ENCODE measurements at regions of chr20 and their contacts with region 1.

Region 1: GRCh38 chr20:50744143-50744792 is 12.9 kb downstream of the PARD6B start:
- DNase-seq: peak; percentile 66
- H3K4me3 ChIP-seq: no peak overlapping the region
- H3K27me3 ChIP-seq: no peaks in the 10 kb centered on the region
- CTCF ChIP-seq: peak; percentile 51

Region 2: DNA sequence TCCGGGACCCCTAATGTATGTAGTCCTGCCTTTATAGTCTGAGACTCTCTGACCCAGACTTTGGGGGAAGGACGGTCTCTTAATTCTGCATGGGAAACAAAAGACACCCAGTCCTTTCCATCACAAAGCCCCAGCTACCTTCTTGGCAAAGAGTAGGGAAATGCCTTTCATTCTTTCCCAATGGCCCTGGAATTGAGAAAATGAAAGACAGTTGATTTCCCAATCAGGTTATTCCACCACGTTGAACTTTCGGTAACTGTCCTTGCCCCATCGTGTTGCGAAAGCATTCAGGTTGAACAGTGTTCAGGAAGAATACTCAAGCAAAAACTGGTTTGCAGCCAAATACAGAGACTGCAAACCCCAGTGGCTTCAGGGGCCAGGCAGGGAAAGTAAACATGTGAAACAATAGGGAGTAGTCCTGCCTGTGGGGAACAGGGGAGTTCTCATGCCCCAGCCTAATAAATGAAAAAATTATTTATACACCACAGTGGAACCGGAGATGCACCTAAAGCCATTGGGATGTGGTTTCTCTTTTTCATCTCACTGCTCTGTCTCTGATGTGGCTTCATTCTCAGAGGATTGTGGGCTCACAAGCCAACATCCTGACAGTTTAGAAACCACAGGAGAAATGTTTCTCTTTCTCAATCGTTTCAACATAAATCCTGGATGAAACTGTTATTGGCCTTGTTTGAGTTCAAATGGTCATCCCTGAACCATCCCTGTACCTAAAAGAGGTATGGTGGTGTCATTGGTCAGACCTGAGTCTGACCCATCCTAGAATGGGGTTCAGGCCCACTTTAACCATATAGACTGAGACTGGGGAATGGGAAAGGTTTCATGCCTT is 975.8 kb before region 1 on chr20:
- CTCF ChIA-PET with region 1: no interaction called
- POLR2A ChIA-PET with region 1: interaction called, 19 read pairs
- DNase-seq: peak; percentile 68
- H3K4me3 ChIP-seq: no peak overlapping the region
- H3K27me3 ChIP-seq: no peaks in the 10 kb centered on the region
- CTCF ChIP-seq: no peak

Region 3: DNA sequence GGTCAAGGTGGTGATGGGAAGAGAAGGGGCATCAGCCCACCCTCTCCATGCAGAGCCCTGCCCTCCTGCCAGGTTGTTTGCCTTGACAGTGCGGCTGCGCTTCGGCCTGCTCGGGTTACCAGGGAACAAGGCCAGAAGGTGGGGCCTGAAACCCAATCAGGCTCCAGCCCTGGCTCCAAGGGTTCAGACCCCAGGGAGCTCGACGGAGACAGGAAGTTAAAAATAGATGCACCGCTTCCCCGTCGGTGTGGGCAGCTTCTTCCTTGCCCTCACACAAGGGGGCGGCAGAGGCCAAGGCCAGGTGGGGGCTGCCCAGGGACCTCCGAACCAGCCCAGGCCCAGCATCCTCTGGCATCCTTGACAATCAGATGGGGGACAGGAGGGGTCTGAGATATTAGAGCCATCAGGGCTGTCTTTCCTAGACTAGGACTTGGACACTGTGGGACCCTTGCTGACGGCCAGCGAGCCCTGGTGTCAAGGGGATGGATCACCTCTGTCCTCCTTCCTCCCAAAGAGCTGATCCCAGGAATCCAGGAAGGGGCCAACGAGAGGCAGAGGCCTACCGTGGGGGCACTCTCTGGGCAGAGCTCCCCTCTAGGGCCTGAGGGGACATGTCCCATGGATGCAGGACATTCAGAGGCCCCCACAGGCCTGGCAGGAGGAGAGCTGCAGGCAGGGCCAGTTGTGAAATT is 118.1 kb before region 1 on chr20:
- CTCF ChIA-PET with region 1: interaction called, 45 read pairs
- POLR2A ChIA-PET with region 1: no interaction called
- DNase-seq: no peak
- H3K4me3 ChIP-seq: no peak overlapping the region
- H3K27me3 ChIP-seq: no peaks in the 10 kb centered on the region
- CTCF ChIP-seq: peak; percentile 82

Region 4: GRCh38 chr20:50635667-50636503 is 108.4 kb before region 1 on chr20:
- CTCF ChIA-PET with region 1: interaction called, 15 read pairs
- POLR2A ChIA-PET with region 1: no interaction called
- DNase-seq: no peak
- H3K4me3 ChIP-seq: no peak overlapping the region
- H3K27me3 ChIP-seq: peaks cover 4% of the 10 kb centered on the region
- CTCF ChIP-seq: peak; percentile 92

Region 5: GRCh38 chr20:50834599-50835005 is 90.3 kb after region 1 on chr20:
- CTCF ChIA-PET with region 1: no interaction called
- POLR2A ChIA-PET with region 1: no interaction called
- DNase-seq: peak; percentile 56
- H3K4me3 ChIP-seq: no peak overlapping the region
- H3K27me3 ChIP-seq: no peaks in the 10 kb centered on the region
- CTCF ChIP-seq: no peak